Heart left ventricle (tissue), 16 donors: ENCODE measurements at regions of chr4 and their contacts with region 1.

Region 1: GRCh38 chr4:147173797-147174432 is 228.3 kb upstream of the TTC29 start:
- DNase-seq: peak in 4 of 5 donors; percentile 41 to 62 (median 52)
- ATAC-seq: peak; percentile 99 to 100 (median 100)
- H3K4me3 ChIP-seq: no peak overlapping the region
- H3K27ac ChIP-seq: peak overlapping the region in 6 of 12 donors; percentile 20 to 59 (median 46)
- H3K4me1 ChIP-seq: peaks cover 0 to 16% (median 2%) of the 10 kb centered on the region in 12 donors
- H3K27me3 ChIP-seq: no peaks in the 10 kb centered on the region
- CTCF ChIP-seq: no peak
- POLR2A ChIP-seq: no peak

Region 2: GRCh38 chr4:147160908-147161513 is 12.9 kb before region 1 on chr4:
- intact Hi-C with region 1: no loop called
- DNase-seq: no peak
- ATAC-seq: peak; percentile 15 to 82 (median 71)
- H3K4me3 ChIP-seq: no peak overlapping the region
- H3K27ac ChIP-seq: no peak overlapping the region
- H3K4me1 ChIP-seq: peaks cover 0 to 17% (median 0%) of the 10 kb centered on the region in 12 donors
- H3K27me3 ChIP-seq: peaks cover 0 to 4% (median 0%) of the 10 kb centered on the region in 9 donors
- CTCF ChIP-seq: peak; percentile 59 to 85 (median 74)
- POLR2A ChIP-seq: no peak

Region 3: DNA sequence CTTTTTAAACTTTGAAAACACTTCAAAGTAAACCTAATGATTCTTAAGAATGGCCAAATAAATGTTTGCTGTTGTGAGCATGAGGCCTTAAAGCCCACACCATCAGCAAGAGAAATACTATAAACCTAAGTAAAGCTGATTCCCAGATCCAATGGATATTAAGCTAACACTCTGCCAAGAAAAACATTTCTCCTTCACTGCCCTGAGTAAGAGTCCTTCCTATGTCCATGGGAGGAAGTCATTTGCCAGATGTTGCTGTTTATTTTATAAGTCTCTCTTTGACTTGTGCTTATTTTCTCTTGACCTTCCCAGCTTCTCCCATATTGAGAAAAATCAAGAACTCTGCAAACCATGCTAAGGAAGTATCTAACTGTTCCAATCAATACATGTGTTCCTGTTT is 152.7 kb after region 1 on chr4:
- intact Hi-C with region 1: loop called in 1 of 10 experiments (anchors 5 kb)
- DNase-seq: no peak
- ATAC-seq: peak in 2 of 4 donors; percentile 19 to 53
- H3K4me3 ChIP-seq: no peak overlapping the region
- H3K27ac ChIP-seq: peak overlapping the region in 9 of 12 donors; percentile 17 to 77 (median 56)
- H3K4me1 ChIP-seq: peaks cover 0 to 37% (median 11%) of the 10 kb centered on the region in 12 donors
- H3K27me3 ChIP-seq: no peaks in the 10 kb centered on the region
- CTCF ChIP-seq: no peak
- POLR2A ChIP-seq: no peak